ENCODE measurements at regions of chr19 and their contacts with region 1.

Region 1: GRCh38 chr19:14136509-14137281 is at the start of gene ASF1B:
- DNase-seq: peak; percentile 100
- H3K4me3 ChIP-seq: peak within 1 kb of the TSS; percentile 89
- H3K27ac ChIP-seq: peak within 1 kb of the TSS; percentile 84
- H3K4me1 ChIP-seq: peaks cover 21% of the 10 kb centered on the region
- H3K27me3 ChIP-seq: no peaks in the 10 kb centered on the region
- CTCF ChIP-seq: peak; percentile 91
- total RNA-seq, gene ASF1B: 50.0 and 54.6 TPM in 2 replicates

Region 2: GRCh38 chr19:13962699-13963602 is 173.7 kb before region 1 on chr19:
- CTCF ChIA-PET with region 1: no interaction called
- POLR2A ChIA-PET with region 1: no interaction called
- intact Hi-C with region 1: no loop called
- DNase-seq: no peak
- H3K4me3 ChIP-seq: no peak overlapping the region
- H3K27ac ChIP-seq: no peak overlapping the region
- H3K4me1 ChIP-seq: no peaks in the 10 kb centered on the region
- H3K27me3 ChIP-seq: no peaks in the 10 kb centered on the region
- CTCF ChIP-seq: no peak

Region 3: DNA sequence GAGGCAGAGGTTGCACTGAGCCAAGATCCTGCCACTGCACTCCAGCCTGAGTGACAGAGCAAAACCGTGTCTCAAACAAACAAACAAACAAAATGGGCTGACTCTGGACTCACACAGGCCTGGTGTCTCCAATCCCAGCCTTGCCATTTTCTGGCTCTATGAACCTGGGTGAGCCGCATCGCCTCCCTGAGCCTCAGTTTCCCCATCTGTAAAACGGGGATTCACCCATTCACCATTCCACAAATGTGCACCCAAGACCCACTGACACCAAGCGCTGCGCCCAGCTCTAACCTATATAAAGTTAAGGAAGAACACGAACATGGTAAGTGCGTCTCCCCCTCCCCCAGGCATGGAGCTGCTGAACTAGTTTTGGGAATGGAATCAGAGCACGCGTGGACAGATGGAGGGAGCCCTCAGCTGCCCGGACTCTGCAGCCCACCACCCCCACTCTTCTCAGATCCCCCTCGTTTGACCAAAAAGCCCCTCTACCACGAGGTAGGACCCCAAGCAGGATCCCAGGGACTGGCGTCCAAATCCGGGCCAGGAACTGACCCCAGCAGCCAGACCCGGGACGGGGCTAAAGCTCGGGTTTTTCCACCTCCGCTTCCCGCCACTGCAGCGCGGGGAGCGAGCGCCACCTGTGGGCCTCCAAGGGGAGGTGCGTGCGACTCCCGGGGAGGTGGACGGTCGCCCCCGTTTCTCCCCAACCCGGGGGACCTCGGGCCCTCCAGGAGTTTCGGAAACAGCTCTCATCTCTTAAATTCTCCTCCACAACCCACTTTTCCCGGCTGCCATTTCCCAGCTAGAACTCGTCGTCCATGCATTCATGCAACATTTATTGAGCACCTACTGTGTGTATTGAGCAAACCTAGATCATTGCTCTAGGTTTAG is 211.5 kb after region 1 on chr19:
- CTCF ChIA-PET with region 1: interaction called, 7 read pairs
- POLR2A ChIA-PET with region 1: no interaction called
- intact Hi-C with region 1: loop called (anchors 5 kb)
- DNase-seq: peak; percentile 73
- H3K4me3 ChIP-seq: peak overlapping the region; percentile 36
- H3K27ac ChIP-seq: no peak overlapping the region
- H3K4me1 ChIP-seq: no peaks in the 10 kb centered on the region
- H3K27me3 ChIP-seq: no peaks in the 10 kb centered on the region
- CTCF ChIP-seq: peak; percentile 99

Region 4: GRCh38 chr19:14405758-14406644 is 269.3 kb after region 1 on chr19:
- CTCF ChIA-PET with region 1: interaction called, 3 read pairs
- POLR2A ChIA-PET with region 1: no interaction called
- intact Hi-C with region 1: loop called (anchors 1 kb)
- DNase-seq: peak; percentile 92
- H3K4me3 ChIP-seq: peak overlapping the region; percentile 10
- H3K27ac ChIP-seq: no peak overlapping the region
- H3K4me1 ChIP-seq: peaks cover 4% of the 10 kb centered on the region
- H3K27me3 ChIP-seq: no peaks in the 10 kb centered on the region
- CTCF ChIP-seq: peak; percentile 80

Region 5: GRCh38 chr19:14479975-14480699 is 343.4 kb after region 1 on chr19:
- CTCF ChIA-PET with region 1: interaction called, 4 read pairs
- POLR2A ChIA-PET with region 1: no interaction called
- intact Hi-C with region 1: loop called (anchors 5 kb)
- DNase-seq: peak; percentile 74
- H3K4me3 ChIP-seq: no peak overlapping the region
- H3K27ac ChIP-seq: no peak overlapping the region
- H3K4me1 ChIP-seq: peaks cover 32% of the 10 kb centered on the region
- H3K27me3 ChIP-seq: no peaks in the 10 kb centered on the region
- CTCF ChIP-seq: peak; percentile 99